ENCODE measurements at regions of chr7 and their contacts with region 1.

Region 1: DNA sequence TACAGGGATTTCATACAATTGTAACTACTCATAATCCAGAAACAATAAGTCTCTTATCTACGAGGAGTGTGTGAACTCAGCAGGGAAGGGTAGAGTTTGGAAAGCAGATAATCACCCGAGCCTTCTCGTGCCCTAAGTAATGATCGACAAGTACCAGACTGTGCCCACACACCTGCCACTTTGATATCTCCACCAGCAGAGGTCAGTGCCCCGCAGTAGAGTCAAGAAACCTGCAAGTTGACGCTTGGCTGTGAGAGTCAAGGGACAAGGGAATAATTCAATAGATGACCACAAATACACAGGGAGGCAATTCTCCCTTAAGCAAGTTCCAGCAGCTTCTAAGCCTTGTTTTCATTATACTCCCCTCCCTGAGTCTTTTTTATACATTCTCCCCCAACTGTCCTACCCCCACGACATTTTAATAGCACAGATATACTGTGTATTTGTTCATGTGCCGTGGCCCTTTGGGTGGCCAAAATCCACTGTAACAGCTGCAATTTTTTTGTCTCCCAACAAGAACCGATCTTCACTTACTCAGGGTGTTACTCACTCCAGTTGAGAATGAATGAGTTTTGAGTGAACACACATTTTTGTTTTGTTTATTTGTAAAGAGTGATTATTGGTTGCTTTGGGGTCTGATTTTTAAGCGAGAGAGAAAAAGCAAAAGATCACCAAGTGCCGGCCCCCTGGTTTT is 106.9 kb upstream of the RHEB start:
- DNase-seq: peak; percentile 48
- H3K4me3 ChIP-seq: no peak overlapping the region
- H3K27ac ChIP-seq: peak overlapping the region in 1 of 2 donors; percentile 39
- H3K4me1 ChIP-seq: peaks cover 3% of the 10 kb centered on the region
- H3K27me3 ChIP-seq: no peaks in the 10 kb centered on the region
- CTCF ChIP-seq: peak in 2 of 4 experiments; percentile 52 to 67
- POLR2A ChIP-seq: no peak

Region 2: DNA sequence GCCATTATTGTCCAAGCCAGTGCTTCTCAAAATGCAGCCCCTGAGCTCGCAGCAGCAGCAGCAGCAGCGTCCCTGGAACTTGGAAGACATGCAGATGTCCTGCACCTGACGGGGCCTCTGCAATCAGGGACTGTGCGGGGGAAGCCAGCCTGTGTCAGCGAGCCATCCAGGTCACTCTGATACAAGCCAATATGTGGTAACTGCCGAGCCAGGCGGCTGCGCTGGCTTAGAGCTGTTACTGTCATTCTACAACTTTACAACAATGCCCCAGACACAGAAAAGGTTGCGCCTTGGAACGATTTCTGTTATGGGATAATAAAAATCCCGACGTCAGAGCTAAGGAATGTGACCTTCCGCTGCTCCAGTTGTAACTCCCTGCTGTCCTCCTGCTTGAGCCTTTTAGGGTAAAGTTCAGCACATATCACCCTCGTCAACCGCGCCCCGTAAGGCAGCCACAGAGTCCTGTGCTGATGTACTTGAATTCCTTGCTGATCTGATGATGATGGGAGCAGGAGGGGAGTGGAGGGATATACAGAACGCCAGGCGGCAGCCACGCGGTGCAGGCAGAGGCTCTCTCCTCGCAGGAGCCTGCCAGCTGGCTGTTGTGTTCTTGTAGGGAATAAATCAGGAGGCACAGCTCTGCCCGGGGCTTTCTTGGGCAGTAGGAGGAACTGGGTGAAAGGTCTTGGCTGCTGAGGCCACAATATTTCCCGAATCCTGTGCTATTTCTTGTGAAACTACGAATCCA is 166.7 kb before region 1 on chr7:
- intact Hi-C with region 1: loop called (anchors 10 kb)
- DNase-seq: peak; percentile 87
- H3K4me3 ChIP-seq: peak overlapping the region in 1 of 2 donors; percentile 2
- H3K27ac ChIP-seq: peak overlapping the region; percentile 76 to 81
- H3K4me1 ChIP-seq: peaks cover 5% of the 10 kb centered on the region
- H3K27me3 ChIP-seq: no peaks in the 10 kb centered on the region
- CTCF ChIP-seq: peak in 3 of 4 experiments; percentile 29 to 48 (median 45)
- POLR2A ChIP-seq: no peak

Region 3: DNA sequence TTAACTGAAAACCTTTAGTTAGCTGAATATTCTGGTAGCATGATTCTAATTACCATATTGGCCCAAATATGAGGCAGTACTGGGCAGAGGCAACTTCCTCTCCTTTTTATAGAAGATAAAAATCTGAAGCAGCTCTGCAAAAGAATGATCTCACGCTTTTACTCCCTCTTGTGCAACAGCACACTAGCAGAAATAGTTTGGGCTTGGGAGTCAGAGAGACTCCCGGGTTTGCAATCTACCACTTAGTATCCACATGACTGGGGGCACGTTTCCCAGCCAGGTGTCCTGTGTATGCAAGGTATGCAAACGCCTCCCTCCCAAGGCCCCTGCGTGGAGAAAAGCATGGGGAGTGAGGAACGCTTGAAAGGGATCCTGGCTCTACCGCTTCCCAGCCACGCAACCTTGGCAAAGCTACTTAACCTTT is 59.7 kb before region 1 on chr7:
- intact Hi-C with region 1: loop called (anchors 5 kb)
- DNase-seq: peak; percentile 69
- H3K4me3 ChIP-seq: no peak overlapping the region
- H3K27ac ChIP-seq: peak overlapping the region; percentile 55 to 57
- H3K4me1 ChIP-seq: no peaks in the 10 kb centered on the region
- H3K27me3 ChIP-seq: no peaks in the 10 kb centered on the region
- CTCF ChIP-seq: no peak
- POLR2A ChIP-seq: no peak

Region 4: DNA sequence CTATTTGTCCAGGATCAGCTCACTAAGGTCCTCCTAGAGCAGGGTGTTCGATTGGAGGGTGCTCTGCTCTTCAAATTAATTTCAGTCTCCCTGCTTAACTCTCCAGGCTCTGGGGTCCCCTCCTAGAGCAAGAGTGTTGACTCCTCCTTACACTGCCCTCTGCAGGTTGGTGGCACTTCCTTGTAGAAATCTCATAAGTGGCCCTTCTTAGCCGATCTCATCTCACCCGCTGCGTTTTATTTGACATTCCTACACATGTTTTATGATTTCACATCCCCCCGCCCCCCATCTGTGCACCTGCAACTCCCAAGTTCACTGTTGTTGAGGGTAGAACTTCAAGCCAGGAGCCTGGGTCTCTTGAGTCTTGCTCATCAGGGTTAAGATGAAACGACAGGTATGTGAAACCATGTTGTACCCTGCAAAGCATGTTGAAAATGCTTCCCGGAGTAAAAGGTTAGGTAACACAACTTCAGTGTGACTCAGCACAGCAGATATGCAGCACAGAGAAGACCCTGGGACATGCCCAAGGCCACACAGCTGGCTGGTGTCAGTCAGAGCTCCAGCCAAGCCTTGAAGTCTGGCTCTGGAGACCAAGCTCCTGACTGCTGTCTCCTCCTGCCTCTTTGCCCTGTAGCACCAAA is 79.2 kb after region 1 on chr7:
- intact Hi-C with region 1: loop called (anchors 5 kb)
- DNase-seq: no peak
- H3K4me3 ChIP-seq: no peak overlapping the region
- H3K27ac ChIP-seq: no peak overlapping the region
- H3K4me1 ChIP-seq: no peaks in the 10 kb centered on the region
- H3K27me3 ChIP-seq: no peaks in the 10 kb centered on the region
- CTCF ChIP-seq: peak in 3 of 4 experiments; percentile 38 to 64 (median 46)
- POLR2A ChIP-seq: no peak

Region 5: DNA sequence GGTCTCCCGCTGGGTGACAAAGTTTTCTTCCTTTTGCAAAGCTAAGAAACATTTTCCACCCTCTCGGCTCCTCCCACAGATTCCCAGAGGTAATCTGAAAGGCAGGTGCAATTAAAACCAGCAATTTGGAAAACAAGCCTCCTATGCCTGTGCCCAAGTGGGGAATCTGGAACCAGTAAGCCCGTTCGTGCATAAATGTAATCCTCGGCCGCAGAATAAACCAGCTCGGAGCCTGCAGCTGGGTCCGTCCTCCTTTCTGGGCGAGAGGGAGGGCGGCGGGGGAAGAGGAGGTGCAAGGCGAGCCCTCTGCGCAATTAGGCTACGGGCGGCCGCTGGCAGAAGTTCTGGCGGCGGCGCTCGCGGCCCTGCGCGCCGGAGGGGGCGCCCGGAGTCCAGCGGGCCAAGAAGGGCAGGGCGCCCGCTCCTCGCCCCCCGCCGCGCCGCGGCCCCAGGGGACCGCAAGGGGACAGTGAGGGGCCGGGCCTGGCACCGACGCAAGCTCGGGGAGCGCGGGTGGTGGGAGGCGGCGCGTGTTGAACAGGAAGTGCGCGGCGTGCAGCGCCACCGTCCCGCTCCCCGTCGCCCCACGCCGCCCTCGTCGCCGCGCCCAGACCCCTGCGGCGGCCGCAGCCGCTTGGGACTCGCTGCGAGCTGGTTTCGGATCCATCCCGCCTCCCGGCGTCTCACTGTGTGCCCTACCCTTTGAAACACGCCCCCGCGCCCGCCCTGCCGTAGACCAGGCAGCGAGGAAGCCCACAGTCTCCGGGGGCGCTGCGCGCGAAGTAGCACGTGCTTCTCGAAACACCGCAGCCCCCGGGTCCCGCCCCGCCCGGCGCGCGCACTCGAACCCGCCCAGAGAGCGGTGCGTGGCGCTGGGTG is 250.6 kb after region 1 on chr7 and contains the start of gene PRKAG2:
- intact Hi-C with region 1: loop called (anchors 10 kb)
- DNase-seq: peak; percentile 73
- H3K4me3 ChIP-seq: peak within 1 kb of the TSS; percentile 93 to 97
- H3K27ac ChIP-seq: peak within 1 kb of the TSS; percentile 99
- H3K4me1 ChIP-seq: peaks cover 10% of the 10 kb centered on the region
- H3K27me3 ChIP-seq: no peaks in the 10 kb centered on the region
- CTCF ChIP-seq: peak in 2 of 4 experiments; percentile 2 to 43
- POLR2A ChIP-seq: peak; percentile 39
- total RNA-seq, gene PRKAG2: 31.6 to 38.1 TPM

Measured in prostate gland (tissue), 2 donors.